ENCODE measurements at regions of chr20 and their contacts with region 1.

Region 1: GRCh38 chr20:32484958-32485769 is 100.0 kb downstream of the NOL4L start:
- DNase-seq: peak; percentile 34
- ATAC-seq: peak; percentile 70
- H3K4me3 ChIP-seq: peak overlapping the region; percentile 48 to 62
- H3K27ac ChIP-seq: no peak overlapping the region; the same call in 1 of the 2 replicates
- H3K4me1 ChIP-seq: peaks cover 8 to 31% of the 10 kb centered on the region in 2 experiments
- H3K27me3 ChIP-seq: no peaks in the 10 kb centered on the region
- CTCF ChIP-seq: peak; percentile 53 to 80 (median 77); a peak in 5 of 6 replicates
- POLR2A ChIP-seq: no peak
- RAD21 ChIP-seq: peak; percentile 59

Region 2: GRCh38 chr20:32018269-32019074 is 466.7 kb before region 1 on chr20:
- CTCF ChIA-PET with region 1: no interaction called
- POLR2A ChIA-PET with region 1: no interaction called
- RAD21 ChIA-PET with region 1: no interaction called
- intact Hi-C with region 1: loop called (anchors 5 kb)
- DNase-seq: peak; percentile 81
- ATAC-seq: peak; percentile 85
- H3K4me3 ChIP-seq: peak overlapping the region; percentile 42 to 58
- H3K27ac ChIP-seq: peak overlapping the region; percentile 78
- H3K4me1 ChIP-seq: peaks cover 9 to 24% of the 10 kb centered on the region in 2 experiments
- H3K27me3 ChIP-seq: peaks cover 10% of the 10 kb centered on the region
- CTCF ChIP-seq: no peak
- POLR2A ChIP-seq: peak; percentile 22
- RAD21 ChIP-seq: no peak

Region 3: DNA sequence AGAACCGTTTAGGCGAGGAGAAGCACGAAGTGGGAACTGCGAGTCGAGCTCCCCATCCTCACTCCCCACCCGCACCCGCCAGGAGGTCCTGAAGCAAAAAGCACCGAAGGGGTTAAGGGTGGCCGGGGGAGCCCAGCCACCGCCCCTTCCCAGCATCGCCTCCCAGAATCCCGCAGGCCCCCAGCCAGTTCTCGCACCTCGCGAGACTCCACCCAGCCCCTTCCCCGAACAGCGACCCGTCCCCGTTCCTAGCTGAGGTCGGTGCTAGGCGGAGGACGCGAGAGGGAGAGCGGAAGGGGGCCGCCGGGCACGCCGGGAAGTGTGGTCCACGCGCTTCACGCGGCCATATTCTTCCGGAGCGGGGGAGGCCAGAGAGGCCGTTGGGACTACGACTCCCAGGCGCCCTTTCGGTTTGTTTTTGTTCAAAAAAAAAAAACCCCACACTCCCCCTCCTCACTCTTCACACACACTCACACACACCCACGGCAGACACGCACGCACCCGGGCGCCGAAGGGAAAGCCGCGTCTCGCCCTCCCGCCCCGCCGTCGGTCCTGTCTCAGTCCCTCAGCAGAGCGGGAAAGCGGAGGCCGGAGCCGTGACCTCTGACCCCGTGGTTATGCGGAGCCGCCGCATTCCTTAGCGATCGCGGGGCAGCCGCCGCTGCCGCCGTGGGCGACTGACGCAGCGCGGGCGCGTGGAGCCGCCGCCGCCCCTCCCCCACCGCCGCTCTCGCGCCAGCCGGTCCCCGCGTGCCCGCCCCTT is 127.1 kb before region 1 on chr20 and contains the start of gene ASXL1:
- CTCF ChIA-PET with region 1: no interaction called
- POLR2A ChIA-PET with region 1: no interaction called
- RAD21 ChIA-PET with region 1: no interaction called
- intact Hi-C with region 1: loop called (anchors 2 kb)
- DNase-seq: peak; percentile 92
- ATAC-seq: peak; percentile 89
- H3K4me3 ChIP-seq: peak within 1 kb of the TSS; percentile 88 to 92
- H3K27ac ChIP-seq: peak within 1 kb of the TSS; percentile 92
- H3K4me1 ChIP-seq: peaks cover 39 to 47% of the 10 kb centered on the region in 2 experiments
- H3K27me3 ChIP-seq: no peaks in the 10 kb centered on the region
- CTCF ChIP-seq: no peak
- POLR2A ChIP-seq: no peak
- RAD21 ChIP-seq: no peak
- total RNA-seq, gene ASXL1: 52.2 TPM